HEK293T (cell line): ENCODE measurements at regions of chr6 and their contacts with region 1.

Region 1: DNA sequence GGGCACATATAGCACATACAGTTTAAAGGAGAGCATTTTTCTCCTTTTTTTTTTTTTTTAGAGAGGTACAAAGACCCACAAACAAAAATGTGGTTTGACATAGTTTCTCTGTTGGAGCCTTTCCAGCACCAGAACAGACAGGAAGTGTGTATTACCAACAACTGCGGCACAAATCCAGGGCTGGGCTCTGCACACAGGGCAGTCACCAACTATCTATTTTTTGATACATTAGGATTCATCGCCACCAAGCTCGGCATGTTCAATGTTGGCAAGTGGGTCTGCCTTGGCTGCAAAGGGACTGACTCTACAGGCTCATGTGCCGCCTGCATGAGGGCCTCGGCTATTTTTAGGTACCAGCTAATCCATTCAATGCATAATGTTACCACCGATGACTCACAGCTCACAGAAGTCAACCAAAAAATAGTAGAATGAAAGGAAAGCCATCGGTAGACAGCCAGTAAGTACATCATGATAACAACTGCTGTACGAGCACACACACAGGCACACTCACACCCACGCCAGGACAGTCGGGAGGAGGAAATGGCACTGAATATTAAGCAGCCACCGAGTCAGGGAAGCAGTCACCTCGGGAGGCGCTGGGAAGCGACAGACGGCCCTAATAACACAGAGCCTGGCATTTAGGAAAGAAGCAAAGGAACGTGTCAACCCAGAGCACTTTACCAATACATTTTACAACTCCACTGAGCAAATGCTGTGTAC is 81.6 kb downstream of the GMPR start:
- DNase-seq: peak; percentile 22

Region 2: GRCh38 chr6:16064671-16065072 is 255.3 kb before region 1 on chr6:
- CTCF ChIA-PET with region 1: interaction called, 11 read pairs
- POLR2A ChIA-PET with region 1: no interaction called
- DNase-seq: no peak

Region 3: DNA sequence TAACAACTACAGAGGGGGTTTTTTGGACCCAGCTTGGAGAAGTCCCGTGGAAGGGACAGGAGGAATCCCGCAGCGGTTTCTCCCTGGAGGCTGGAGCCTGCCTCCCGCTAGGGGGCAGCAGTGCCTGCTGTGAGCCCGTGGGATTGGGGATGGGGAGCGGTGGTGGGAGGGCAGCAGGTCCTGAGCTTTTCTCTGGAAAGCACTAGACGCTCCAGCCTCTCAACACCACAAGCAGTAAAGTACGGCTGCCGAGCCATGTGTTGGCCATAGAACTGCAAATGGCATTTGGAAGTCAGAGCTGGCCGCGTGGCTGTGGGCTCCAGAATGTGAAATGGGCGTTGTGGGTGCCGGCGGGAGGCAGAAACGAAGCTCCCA is 33.8 kb before region 1 on chr6:
- CTCF ChIA-PET with region 1: interaction called, 11 read pairs
- POLR2A ChIA-PET with region 1: interaction called, 4 read pairs
- DNase-seq: peak; percentile 79

Region 4: DNA sequence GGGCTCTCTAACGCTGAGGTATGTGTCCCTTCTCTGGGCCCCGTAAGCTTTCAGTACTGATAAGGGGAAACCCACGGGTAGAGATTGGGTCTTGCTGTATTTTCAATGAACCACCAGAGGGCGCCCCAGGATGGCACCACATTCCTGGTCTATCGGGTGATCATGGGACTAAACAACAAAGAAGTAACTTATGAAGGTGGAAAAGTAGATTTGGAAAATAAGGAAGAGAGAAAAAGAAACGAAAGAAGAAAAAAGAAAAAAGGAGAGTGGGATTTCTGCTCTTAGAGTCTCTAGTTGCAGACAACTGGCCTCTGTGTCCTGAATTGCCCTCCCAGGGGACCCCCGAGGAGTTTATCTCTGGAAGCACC is 12.2 kb after region 1 on chr6:
- CTCF ChIA-PET with region 1: interaction called, 17 read pairs
- POLR2A ChIA-PET with region 1: no interaction called
- DNase-seq: peak; percentile 70